ENCODE measurements at regions of chr12 and their contacts with region 1.

Region 1: GRCh38 chr12:26287671-26288381 is 92.5 kb downstream of the SSPN start:
- DNase-seq: no peak
- H3K4me3 ChIP-seq: no peak overlapping the region
- H3K27ac ChIP-seq: no peak overlapping the region
- H3K4me1 ChIP-seq: peaks cover 13% of the 10 kb centered on the region
- H3K27me3 ChIP-seq: no peaks in the 10 kb centered on the region
- CTCF ChIP-seq: no peak
- POLR2A ChIP-seq: no peak

Region 2: GRCh38 chr12:26126340-26127284 is 161.2 kb before region 1 on chr12:
- intact Hi-C with region 1: loop called (anchors 10 kb)
- DNase-seq: no peak
- H3K4me3 ChIP-seq: peak overlapping the region; percentile 70 to 72
- H3K27ac ChIP-seq: peak overlapping the region; percentile 94
- H3K4me1 ChIP-seq: peaks cover 29% of the 10 kb centered on the region
- H3K27me3 ChIP-seq: no peaks in the 10 kb centered on the region
- CTCF ChIP-seq: no peak
- POLR2A ChIP-seq: peak in 1 of 2 donors; percentile 40

Region 3: GRCh38 chr12:26455936-26456574 is 168.2 kb after region 1 on chr12:
- intact Hi-C with region 1: no loop called
- DNase-seq: no peak
- H3K4me3 ChIP-seq: no peak overlapping the region
- H3K27ac ChIP-seq: no peak overlapping the region
- H3K4me1 ChIP-seq: peaks cover 5% of the 10 kb centered on the region
- H3K27me3 ChIP-seq: no peaks in the 10 kb centered on the region
- CTCF ChIP-seq: no peak
- POLR2A ChIP-seq: no peak

Region 4: DNA sequence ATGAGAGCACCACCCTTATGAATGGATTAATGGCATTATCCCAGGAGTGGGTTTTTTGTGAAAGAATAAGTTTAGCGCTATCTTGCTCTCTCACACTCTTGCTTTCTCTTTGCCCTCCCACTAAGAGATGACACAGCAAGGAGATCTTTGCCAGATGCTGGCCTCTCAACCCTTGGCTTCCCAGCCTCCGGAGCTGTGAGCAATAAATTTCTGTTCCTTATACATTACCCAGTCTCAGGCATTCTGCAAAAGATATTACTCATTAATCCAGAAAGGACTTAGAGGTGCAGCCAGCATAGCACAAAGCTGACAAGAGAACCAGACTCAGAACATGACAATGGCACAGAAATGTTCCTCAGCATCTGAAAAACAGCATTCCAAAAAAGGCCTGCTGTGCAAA is 354.5 kb after region 1 on chr12:
- intact Hi-C with region 1: no loop called
- DNase-seq: no peak
- H3K4me3 ChIP-seq: no peak overlapping the region
- H3K27ac ChIP-seq: no peak overlapping the region
- H3K4me1 ChIP-seq: no peaks in the 10 kb centered on the region
- H3K27me3 ChIP-seq: no peaks in the 10 kb centered on the region
- CTCF ChIP-seq: no peak
- POLR2A ChIP-seq: no peak